Activated CD4-positive, alpha-beta memory T cell treated with anti-CD3 and anti-CD28 coated beads for 36 hours (primary cell): ENCODE measurements at regions of chr5 and their contacts with region 1.

Region 1: GRCh38 chr5:76256116-76256889 is 146.8 kb upstream of the IQGAP2 start:
- DNase-seq: peak; percentile 78
- H3K4me3 Mint-ChIP-seq: no peak overlapping the region
- H3K27ac Mint-ChIP-seq: no peak overlapping the region
- H3K4me1 Mint-ChIP-seq: peaks cover 6% of the 10 kb centered on the region
- H3K27me3 Mint-ChIP-seq: peaks cover 11% of the 10 kb centered on the region

Region 2: GRCh38 chr5:75734913-75735789 is 521.2 kb before region 1 on chr5:
- CTCF ChIA-PET with region 1: no interaction called
- POLR2A ChIA-PET with region 1: no interaction called
- intact Hi-C with region 1: loop called (anchors 1 kb)
- DNase-seq: peak; percentile 27
- H3K4me3 Mint-ChIP-seq: no peak overlapping the region
- H3K27ac Mint-ChIP-seq: no peak overlapping the region
- H3K4me1 Mint-ChIP-seq: no peaks in the 10 kb centered on the region
- H3K27me3 Mint-ChIP-seq: peaks cover 9% of the 10 kb centered on the region

Region 3: GRCh38 chr5:76074487-76075065 is 181.7 kb before region 1 on chr5:
- CTCF ChIA-PET with region 1: interaction called, 27 read pairs
- POLR2A ChIA-PET with region 1: no interaction called
- intact Hi-C with region 1: loop called (anchors 1 kb)
- DNase-seq: peak; percentile 54
- H3K4me3 Mint-ChIP-seq: no peak overlapping the region
- H3K27ac Mint-ChIP-seq: no peak overlapping the region
- H3K4me1 Mint-ChIP-seq: no peaks in the 10 kb centered on the region
- H3K27me3 Mint-ChIP-seq: peaks cover 46% of the 10 kb centered on the region